BJ (cell line): ENCODE measurements at regions of chr6 and their contacts with region 1.

Region 1: GRCh38 chr6:70706491-70707123 is 38.9 kb downstream of the SMAP1 start:
- DNase-seq: peak; percentile 5
- H3K4me3 ChIP-seq: no peak overlapping the region
- H3K27me3 ChIP-seq: no peaks in the 10 kb centered on the region
- CTCF ChIP-seq: peak; percentile 40

Region 2: GRCh38 chr6:70955441-70956190 is 249.0 kb after region 1 on chr6:
- CTCF ChIA-PET with region 1: interaction called, 26 read pairs
- POLR2A ChIA-PET with region 1: no interaction called
- DNase-seq: no peak
- H3K4me3 ChIP-seq: peak overlapping the region; percentile 38
- H3K27me3 ChIP-seq: peaks cover 20% of the 10 kb centered on the region
- CTCF ChIP-seq: peak; percentile 80

Region 3: GRCh38 chr6:70973604-70974003 is 267.0 kb after region 1 on chr6:
- CTCF ChIA-PET with region 1: no interaction called
- POLR2A ChIA-PET with region 1: no interaction called
- DNase-seq: no peak
- H3K4me3 ChIP-seq: no peak overlapping the region
- H3K27me3 ChIP-seq: no peaks in the 10 kb centered on the region
- CTCF ChIP-seq: no peak